Activated CD4-positive, alpha-beta T cell treated with anti-CD3 and anti-CD28 coated beads for 36 hours (primary cell): ENCODE measurements at regions of chr1 and their contacts with region 1.

Region 1: DNA sequence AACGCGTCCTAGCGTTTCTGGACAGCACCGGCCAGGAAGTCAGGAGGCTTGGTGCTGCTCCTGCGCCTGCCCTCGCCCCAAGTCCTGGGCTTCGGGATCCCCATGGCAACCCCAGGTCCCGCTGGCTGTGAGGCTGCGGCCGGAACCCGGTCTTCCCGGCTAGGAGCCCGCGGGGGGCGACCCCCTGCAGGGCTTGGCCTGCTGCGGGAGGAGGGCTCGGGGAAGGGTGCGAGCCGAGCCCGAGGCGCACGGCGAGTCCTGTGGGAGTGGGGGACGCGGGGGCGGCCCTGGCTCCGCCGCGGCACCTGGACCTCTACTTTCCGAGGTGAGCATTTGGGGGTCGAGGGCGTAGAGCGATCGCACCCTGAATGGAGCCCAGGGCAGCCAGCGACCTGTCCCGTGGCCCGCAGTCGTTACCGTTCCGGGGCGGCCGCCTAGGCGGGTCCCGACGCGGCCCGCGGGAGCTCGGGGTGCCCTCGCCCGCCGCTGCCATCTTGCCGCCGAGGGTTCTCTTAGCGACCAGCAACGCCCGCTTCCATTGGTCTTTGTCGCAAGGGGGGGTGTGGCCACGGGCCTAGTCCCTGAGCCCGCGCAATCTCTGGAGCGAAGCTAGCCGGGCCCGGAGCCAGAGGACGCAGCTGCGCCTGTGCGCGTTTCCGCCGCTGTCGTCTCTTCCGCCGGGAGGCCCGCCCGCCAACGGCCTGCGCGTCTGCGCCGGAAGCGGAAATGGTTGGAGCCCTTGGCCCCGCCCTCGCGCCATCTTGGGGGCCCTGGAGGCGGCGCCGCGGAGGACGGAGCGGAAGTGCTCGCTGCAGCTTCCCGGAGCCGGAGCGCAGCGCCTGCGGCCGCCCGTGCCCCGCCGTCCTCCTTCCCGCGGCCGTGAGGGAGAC is at the starts of genes MORN1 and RER1:
- DNase-seq: peak; percentile 100
- ATAC-seq: peak; percentile 99
- H3K4me3 Mint-ChIP-seq: peak within 1 kb of the TSS; percentile 89
- H3K27ac Mint-ChIP-seq: peak within 1 kb of the TSS; percentile 76
- H3K4me1 Mint-ChIP-seq: peaks cover 38% of the 10 kb centered on the region
- H3K27me3 Mint-ChIP-seq: no peaks in the 10 kb centered on the region
- total RNA-seq, gene MORN1: 5.1 to 6.1 TPM
- total RNA-seq, gene RER1: 146 to 152 TPM

Region 2: DNA sequence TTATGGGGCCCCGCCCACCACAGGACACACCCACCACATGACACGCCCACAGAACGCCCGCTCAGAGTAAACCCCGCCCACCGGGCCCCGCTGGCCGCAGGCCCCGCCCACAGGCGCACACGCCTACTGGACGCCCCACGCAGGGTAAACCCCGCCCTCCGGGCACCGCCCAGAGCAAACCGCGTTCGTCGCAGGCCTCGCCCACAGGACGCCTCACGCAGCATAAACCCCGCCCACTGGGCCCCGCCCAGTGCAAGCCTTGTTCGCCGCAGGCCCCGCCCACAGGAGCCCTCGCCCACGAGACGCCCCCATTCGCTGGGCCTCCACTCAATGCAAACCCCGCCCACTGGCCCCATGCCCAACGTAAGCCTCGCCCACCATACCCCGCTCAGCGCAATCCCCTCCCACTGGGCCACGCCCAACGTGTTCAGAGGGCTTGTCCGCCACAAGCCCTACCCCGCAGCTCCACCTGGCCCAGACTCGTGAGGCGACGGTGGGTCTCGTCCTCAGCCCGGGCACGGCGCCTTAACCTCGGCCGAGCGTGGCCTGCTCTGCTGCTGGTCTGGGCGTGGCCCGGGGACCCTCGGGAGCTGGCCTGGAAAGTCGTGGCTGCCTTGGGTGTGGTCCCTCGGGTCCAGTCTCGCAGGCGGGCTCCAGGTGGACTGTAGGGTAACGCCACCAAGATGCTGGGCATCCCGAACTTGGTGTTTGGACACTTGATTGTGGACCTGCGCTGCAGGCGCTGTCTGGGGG is 471.8 kb before region 1 on chr1:
- CTCF ChIA-PET with region 1: no interaction called
- POLR2A ChIA-PET with region 1: no interaction called
- intact Hi-C with region 1: loop called in 1 of 2 experiments (anchors 1 kb)
- DNase-seq: peak; percentile 100
- ATAC-seq: peak; percentile 92
- H3K4me3 Mint-ChIP-seq: peak overlapping the region; percentile 62
- H3K27ac Mint-ChIP-seq: no peak overlapping the region
- H3K4me1 Mint-ChIP-seq: peaks cover 4% of the 10 kb centered on the region
- H3K27me3 Mint-ChIP-seq: no peaks in the 10 kb centered on the region

Region 3: GRCh38 chr1:2194898-2195673 is 196.2 kb before region 1 on chr1:
- CTCF ChIA-PET with region 1: interaction called, 26 read pairs
- POLR2A ChIA-PET with region 1: interaction called, 4 read pairs
- intact Hi-C with region 1: loop called in 1 of 2 experiments (anchors 1 kb)
- DNase-seq: peak; percentile 93
- ATAC-seq: peak; percentile 67
- H3K4me3 Mint-ChIP-seq: peak overlapping the region; percentile 77
- H3K27ac Mint-ChIP-seq: peak overlapping the region; percentile 86
- H3K4me1 Mint-ChIP-seq: peaks cover 32% of the 10 kb centered on the region
- H3K27me3 Mint-ChIP-seq: no peaks in the 10 kb centered on the region

Region 4: GRCh38 chr1:2227346-2228153 is 163.7 kb before region 1 on chr1:
- CTCF ChIA-PET with region 1: no interaction called
- POLR2A ChIA-PET with region 1: interaction called, 4 read pairs
- intact Hi-C with region 1: loop called in 1 of 2 experiments (anchors 1 kb)
- DNase-seq: peak; percentile 98
- ATAC-seq: peak; percentile 94
- H3K4me3 Mint-ChIP-seq: peak overlapping the region; percentile 32
- H3K27ac Mint-ChIP-seq: no peak overlapping the region
- H3K4me1 Mint-ChIP-seq: peaks cover 6% of the 10 kb centered on the region
- H3K27me3 Mint-ChIP-seq: no peaks in the 10 kb centered on the region

Region 5: DNA sequence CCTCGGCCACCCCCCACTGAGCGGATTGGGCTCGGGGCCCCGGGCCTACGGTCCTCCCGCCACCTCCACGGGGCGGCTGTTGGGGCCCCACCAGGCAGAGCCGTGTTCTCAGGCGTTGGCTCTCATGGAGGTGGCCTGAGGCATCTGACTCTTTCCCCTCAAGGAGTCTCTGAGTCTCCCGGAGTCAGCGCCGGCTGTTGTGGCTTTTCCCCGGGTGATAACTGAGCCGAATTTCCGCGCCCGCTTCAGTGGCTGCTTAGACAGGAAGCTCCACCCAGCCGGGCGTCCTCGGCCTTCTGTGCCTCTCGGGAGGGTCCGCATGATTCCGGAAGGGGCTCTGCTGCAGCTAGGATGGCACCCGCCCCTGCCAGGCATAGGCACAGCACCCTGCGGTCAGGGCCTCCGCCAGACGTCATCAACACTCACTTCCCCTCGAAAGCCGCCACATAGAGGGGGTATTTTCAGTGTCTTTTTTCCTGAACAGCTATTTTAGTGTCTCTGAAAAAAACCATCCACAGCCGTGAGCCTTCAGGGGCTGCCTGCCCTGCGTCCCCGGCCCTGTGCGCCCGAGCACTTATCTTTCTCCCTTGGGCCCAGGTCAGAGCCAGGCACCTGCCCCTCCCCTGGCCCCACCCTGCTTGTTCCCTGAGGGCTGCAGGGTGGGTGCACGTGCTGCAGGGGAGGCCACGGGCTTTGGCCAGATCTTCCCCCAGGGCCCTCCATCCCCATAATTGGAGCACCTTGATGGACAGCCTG is 90.3 kb before region 1 on chr1:
- CTCF ChIA-PET with region 1: no interaction called
- POLR2A ChIA-PET with region 1: no interaction called
- intact Hi-C with region 1: loop called in 1 of 2 experiments (anchors 1 kb)
- DNase-seq: peak; percentile 95
- ATAC-seq: peak; percentile 81
- H3K4me3 Mint-ChIP-seq: peak overlapping the region; percentile 79
- H3K27ac Mint-ChIP-seq: peak overlapping the region; percentile 95
- H3K4me1 Mint-ChIP-seq: peaks cover 59% of the 10 kb centered on the region
- H3K27me3 Mint-ChIP-seq: no peaks in the 10 kb centered on the region

Region 6: DNA sequence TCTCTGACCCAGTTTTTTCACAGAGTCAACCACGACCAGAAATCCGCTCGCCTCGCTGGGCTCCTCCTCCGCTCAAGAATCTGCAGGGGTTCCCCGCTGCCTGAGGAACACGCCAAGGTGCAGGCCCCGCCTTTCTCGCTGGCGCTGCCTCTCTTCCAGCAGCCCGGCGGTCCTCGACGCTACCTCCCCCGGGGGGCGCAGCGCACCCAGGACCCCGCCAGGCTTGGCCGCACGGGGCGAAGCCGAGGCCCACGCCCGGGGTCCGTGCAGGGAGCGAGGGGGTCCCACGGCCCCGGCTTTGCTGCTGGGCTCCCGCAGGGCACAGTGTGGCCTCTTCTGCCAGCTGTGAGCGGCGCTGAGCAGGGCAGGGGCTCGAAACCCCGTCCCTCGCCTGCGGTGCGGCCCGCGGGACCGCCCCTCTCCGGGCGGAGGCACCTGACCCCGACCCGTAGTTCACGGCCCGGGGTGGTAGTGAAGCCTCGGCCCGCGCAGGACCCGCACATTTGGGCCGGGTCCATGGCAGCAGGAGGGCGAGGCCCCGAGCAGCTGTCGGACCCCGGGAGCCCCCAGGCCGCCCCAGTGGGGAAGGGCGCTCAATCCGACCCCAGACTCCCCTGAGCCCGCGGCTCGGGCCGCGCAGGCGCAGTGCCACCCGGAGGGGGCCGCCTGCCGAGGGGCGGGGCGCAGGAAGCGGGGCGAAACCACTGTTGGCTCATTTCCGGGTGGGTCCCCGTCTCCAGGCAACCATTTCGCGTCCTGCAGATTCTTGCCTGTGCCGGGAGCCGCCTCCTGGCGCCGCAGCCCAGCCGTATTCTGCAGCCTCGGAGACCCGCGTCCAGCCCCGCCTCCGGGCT is 251.5 kb after region 1 on chr1:
- CTCF ChIA-PET with region 1: no interaction called
- POLR2A ChIA-PET with region 1: no interaction called
- intact Hi-C with region 1: loop called in 1 of 2 experiments (anchors 1 kb)
- DNase-seq: peak; percentile 97
- ATAC-seq: peak; percentile 86
- H3K4me3 Mint-ChIP-seq: peak overlapping the region; percentile 80
- H3K27ac Mint-ChIP-seq: peak overlapping the region; percentile 83
- H3K4me1 Mint-ChIP-seq: no peaks in the 10 kb centered on the region
- H3K27me3 Mint-ChIP-seq: no peaks in the 10 kb centered on the region